Esophagus squamous epithelium (tissue), 5 donors: ENCODE measurements at regions of chr16 and their contacts with region 1.

Region 1: GRCh38 chr16:25106567-25107465 is 4.7 kb upstream of the LCMT1 start:
- DNase-seq: peak; percentile 47
- H3K4me3 ChIP-seq: peak overlapping the region; percentile 65 to 84 (median 75)
- H3K27ac ChIP-seq: peak overlapping the region; percentile 81 to 95 (median 86)
- H3K4me1 ChIP-seq: peaks cover 12 to 43% (median 30%) of the 10 kb centered on the region in 3 donors
- H3K27me3 ChIP-seq: no peaks in the 10 kb centered on the region
- CTCF ChIP-seq: peak in 2 of 6 experiments; percentile 20 to 30
- POLR2A ChIP-seq: peak in 2 of 4 donors; percentile 62 to 64

Region 2: GRCh38 chr16:24758373-24758772 is 348.4 kb before region 1 on chr16:
- intact Hi-C with region 1: no loop called
- DNase-seq: no peak
- H3K4me3 ChIP-seq: no peak overlapping the region
- H3K27ac ChIP-seq: no peak overlapping the region
- H3K4me1 ChIP-seq: peaks cover 3 to 14% (median 4%) of the 10 kb centered on the region in 3 donors
- H3K27me3 ChIP-seq: no peaks in the 10 kb centered on the region
- CTCF ChIP-seq: no peak
- POLR2A ChIP-seq: no peak

Region 3: GRCh38 chr16:24975428-24975889 is 131.4 kb before region 1 on chr16:
- intact Hi-C with region 1: no loop called
- DNase-seq: no peak
- H3K4me3 ChIP-seq: no peak overlapping the region
- H3K27ac ChIP-seq: peak overlapping the region in 1 of 4 donors; percentile 30
- H3K4me1 ChIP-seq: peaks cover 7 to 43% (median 12%) of the 10 kb centered on the region in 3 donors
- H3K27me3 ChIP-seq: no peaks in the 10 kb centered on the region
- CTCF ChIP-seq: no peak
- POLR2A ChIP-seq: no peak

Region 4: GRCh38 chr16:25060920-25061319 is 45.9 kb before region 1 on chr16:
- intact Hi-C with region 1: loop called (anchors 5 kb)
- DNase-seq: no peak
- H3K4me3 ChIP-seq: no peak overlapping the region
- H3K27ac ChIP-seq: peak overlapping the region in 1 of 4 donors; percentile 25
- H3K4me1 ChIP-seq: peaks cover 0 to 15% (median 0%) of the 10 kb centered on the region in 3 donors
- H3K27me3 ChIP-seq: no peaks in the 10 kb centered on the region
- CTCF ChIP-seq: no peak
- POLR2A ChIP-seq: peak in 1 of 4 donors; percentile 25